Lower leg skin (tissue), 4 donors: ENCODE measurements at regions of chr16 and their contacts with region 1.

Region 1: DNA sequence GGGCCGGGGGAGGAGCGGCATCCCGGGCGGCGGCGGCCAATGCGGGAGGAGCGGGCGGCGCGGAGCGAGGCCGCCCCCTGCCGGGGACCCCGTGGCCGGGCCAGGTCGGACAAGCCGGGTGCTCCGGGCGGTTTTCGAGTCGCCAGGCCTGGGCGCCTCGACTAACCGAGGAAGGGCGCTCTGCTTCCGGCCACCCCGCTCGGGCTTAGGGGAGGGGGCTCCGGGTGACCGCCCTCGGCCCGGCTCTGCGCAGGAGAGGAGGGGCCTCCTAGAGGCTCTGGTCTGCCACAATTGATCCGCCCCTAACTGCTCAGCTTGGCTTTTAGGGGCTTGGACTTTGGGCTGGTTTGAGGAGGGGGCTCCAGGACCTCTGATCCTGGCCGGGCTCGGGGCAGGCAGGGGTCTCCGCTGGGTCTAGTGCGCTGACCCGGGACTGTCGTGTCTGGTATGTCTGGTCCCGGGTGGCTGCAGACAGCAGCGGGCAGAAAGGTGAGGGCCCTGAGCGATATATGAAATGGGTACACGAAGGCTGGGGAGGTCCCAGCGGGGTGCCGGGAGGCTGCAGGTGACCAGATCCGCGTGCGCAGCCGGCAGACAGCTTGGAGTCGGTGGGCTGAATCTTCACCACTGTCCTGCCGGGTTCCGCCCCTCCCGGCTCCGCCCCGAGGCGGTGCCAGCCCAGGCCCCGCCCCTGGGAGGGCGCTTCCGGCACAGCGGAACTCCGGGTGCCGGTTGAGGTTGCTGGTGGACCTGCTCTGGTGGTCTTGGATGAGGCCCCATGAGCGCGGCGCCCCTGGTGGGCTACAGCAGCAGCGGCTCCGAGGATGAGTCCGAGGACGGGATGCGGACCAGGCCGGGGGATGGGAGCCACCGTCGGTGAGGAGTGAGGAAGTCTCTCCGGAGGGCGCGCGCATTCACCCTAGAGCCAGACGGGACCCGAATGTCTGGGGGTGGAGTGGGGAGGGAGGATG is at the start of gene USB1:
- DNase-seq: peak; percentile 70 to 96
- H3K4me3 ChIP-seq: peak within 1 kb of the TSS; percentile 68
- CTCF ChIP-seq: no peak
- POLR2A ChIP-seq: no peak
- total RNA-seq, gene USB1: 13.3 to 34.2 (median 23.3) TPM

Region 2: GRCh38 chr16:57899771-57900661 is 101.0 kb before region 1 on chr16:
- intact Hi-C with region 1: loop called (anchors 1 kb)
- DNase-seq: peak; percentile 45 to 93
- H3K4me3 ChIP-seq: no peak overlapping the region
- CTCF ChIP-seq: peak in 1 of 3 donors; percentile 62
- POLR2A ChIP-seq: no peak